ENCODE measurements at regions of chr14 and their contacts with region 1.

Region 1: DNA sequence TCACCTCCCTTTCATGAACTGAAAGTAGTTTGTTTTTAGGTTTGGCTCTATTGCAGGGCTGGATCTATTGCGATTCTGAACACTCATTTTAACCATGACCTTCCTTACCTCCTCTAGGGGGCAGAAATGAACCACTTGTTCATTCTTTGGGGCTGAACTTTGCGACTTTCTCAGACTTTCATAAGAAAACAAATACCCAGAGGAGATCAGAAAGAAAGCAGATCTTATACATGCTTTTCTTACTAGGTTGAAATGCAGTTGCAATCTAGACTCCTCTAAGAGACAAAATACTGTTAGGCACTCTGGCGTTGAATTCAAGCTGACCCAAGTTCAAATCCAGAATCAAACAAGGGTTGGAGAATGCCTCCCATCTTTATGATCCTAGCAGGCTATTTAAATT is 32.6 kb upstream of the PLEKHG3 start:
- DNase-seq: no peak
- H3K4me3 ChIP-seq: no peak overlapping the region
- H3K27ac ChIP-seq: no peak overlapping the region
- H3K4me1 ChIP-seq: peaks cover 6% of the 10 kb centered on the region
- H3K27me3 ChIP-seq: no peaks in the 10 kb centered on the region
- CTCF ChIP-seq: peak; percentile 67 to 81 (median 70)
- POLR2A ChIP-seq: no peak

Region 2: GRCh38 chr14:64764641-64765520 is 93.3 kb after region 1 on chr14:
- intact Hi-C with region 1: loop called (anchors 2 kb)
- DNase-seq: no peak
- H3K4me3 ChIP-seq: peak overlapping the region in 1 of 2 donors; percentile 25
- H3K27ac ChIP-seq: peak overlapping the region; percentile 7
- H3K4me1 ChIP-seq: peaks cover 43% of the 10 kb centered on the region
- H3K27me3 ChIP-seq: no peaks in the 10 kb centered on the region
- CTCF ChIP-seq: peak; percentile 58 to 91 (median 83)
- POLR2A ChIP-seq: no peak

Measured in vagina (tissue), 2 donors.